Activated CD8-positive, alpha-beta T cell treated with anti-CD3 and anti-CD28 coated beads for 36 hours (primary cell): ENCODE measurements at regions of chr12 and their contacts with region 1.

Region 1: GRCh38 chr12:51531978-51532497 is 59.0 kb upstream of the SCN8A start:
- DNase-seq: peak; percentile 86
- ATAC-seq: peak; percentile 98
- H3K4me3 Mint-ChIP-seq: no peak overlapping the region
- H3K27ac Mint-ChIP-seq: no peak overlapping the region
- H3K4me1 Mint-ChIP-seq: no peaks in the 10 kb centered on the region
- H3K27me3 Mint-ChIP-seq: peaks cover 2% of the 10 kb centered on the region
- CTCF ChIP-seq: peak; percentile 82

Region 2: DNA sequence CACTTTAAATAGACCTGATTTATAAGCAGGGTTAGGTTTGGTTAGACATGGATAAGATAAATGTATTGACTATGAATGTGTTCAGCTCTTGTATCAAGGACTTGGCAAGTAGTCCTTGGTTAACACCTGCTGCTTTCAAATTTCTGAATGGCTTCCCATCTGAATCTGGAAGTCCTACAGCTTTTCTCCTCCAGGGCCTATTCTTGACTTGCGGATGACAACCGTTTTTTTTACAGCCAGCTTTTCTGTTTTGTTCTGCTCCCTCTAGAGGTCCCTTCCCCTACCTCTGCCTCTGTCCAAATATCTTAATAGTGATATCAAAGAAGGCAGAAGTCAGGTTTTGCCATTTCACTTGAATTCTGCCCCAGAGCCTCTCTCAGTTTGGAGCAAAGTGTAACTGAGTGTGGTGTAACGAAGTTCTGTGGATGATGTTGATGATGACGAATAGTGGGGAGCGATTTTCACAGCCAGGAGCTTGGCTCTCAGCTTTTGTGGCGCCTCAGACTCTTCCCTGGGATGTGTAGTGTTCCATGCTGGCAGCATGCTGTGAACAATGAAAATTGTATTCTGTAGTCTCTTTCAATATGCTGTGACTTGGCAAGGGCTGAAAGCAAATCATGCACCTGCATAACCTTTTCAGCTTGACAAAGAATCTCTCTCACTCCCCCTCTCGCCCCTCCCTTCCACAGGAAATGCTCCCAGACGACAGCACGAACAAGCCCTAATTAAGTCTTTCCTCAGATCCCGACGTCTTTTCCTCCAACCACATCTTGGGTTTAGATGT is 112.4 kb before region 1 on chr12:
- CTCF ChIA-PET with region 1: interaction called, 170 read pairs
- POLR2A ChIA-PET with region 1: interaction called, 6 read pairs
- intact Hi-C with region 1: loop called (anchors 2 kb)
- DNase-seq: no peak
- ATAC-seq: no peak
- H3K4me3 Mint-ChIP-seq: no peak overlapping the region
- H3K27ac Mint-ChIP-seq: no peak overlapping the region
- H3K4me1 Mint-ChIP-seq: peaks cover 7% of the 10 kb centered on the region
- H3K27me3 Mint-ChIP-seq: peaks cover 2% of the 10 kb centered on the region
- CTCF ChIP-seq: no peak

Region 3: GRCh38 chr12:51424662-51425438 is 107.2 kb before region 1 on chr12 and contains the start of gene SLC4A8:
- CTCF ChIA-PET with region 1: interaction called, 170 read pairs
- POLR2A ChIA-PET with region 1: interaction called, 6 read pairs
- intact Hi-C with region 1: loop called (anchors 2 kb)
- DNase-seq: peak; percentile 90
- ATAC-seq: peak; percentile 95
- H3K4me3 Mint-ChIP-seq: peak within 1 kb of the TSS; percentile 69
- H3K27ac Mint-ChIP-seq: no peak within 1 kb of the TSS
- H3K4me1 Mint-ChIP-seq: peaks cover 9% of the 10 kb centered on the region
- H3K27me3 Mint-ChIP-seq: no peaks in the 10 kb centered on the region
- CTCF ChIP-seq: peak; percentile 92
- total RNA-seq, gene SLC4A8: 1.1 to 2.7 TPM

Region 4: DNA sequence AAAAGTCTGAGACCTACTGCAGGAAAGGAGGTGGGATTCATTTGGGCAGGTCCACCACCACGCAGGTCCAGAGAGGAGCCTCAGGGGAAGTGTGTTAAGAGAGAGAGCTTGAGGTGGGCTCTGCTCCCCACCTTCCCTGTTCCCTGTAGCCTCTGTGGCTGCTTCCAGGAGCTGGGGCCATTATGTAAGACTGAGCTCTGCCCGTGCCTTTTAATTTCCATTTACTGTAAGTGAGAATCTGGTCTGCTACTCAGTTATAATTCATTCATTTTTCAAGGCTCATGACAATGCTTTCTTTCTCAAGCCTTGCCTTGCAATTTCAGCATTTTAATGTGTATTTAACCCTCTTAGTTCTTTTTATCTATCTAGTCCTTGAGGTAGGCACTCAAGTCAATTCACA is 99.1 kb before region 1 on chr12:
- CTCF ChIA-PET with region 1: interaction called, 16 read pairs
- POLR2A ChIA-PET with region 1: no interaction called
- intact Hi-C with region 1: no loop called
- DNase-seq: no peak
- ATAC-seq: no peak
- H3K4me3 Mint-ChIP-seq: no peak overlapping the region
- H3K27ac Mint-ChIP-seq: no peak overlapping the region
- H3K4me1 Mint-ChIP-seq: no peaks in the 10 kb centered on the region
- H3K27me3 Mint-ChIP-seq: no peaks in the 10 kb centered on the region
- CTCF ChIP-seq: no peak

Region 5: GRCh38 chr12:51521554-51522276 is 10.3 kb before region 1 on chr12:
- CTCF ChIA-PET with region 1: interaction called, 30 read pairs
- POLR2A ChIA-PET with region 1: no interaction called
- intact Hi-C with region 1: no loop called
- DNase-seq: no peak
- ATAC-seq: no peak
- H3K4me3 Mint-ChIP-seq: no peak overlapping the region
- H3K27ac Mint-ChIP-seq: no peak overlapping the region
- H3K4me1 Mint-ChIP-seq: no peaks in the 10 kb centered on the region
- H3K27me3 Mint-ChIP-seq: no peaks in the 10 kb centered on the region
- CTCF ChIP-seq: peak; percentile 19